ENCODE measurements at regions of chr3 and their contacts with region 1.

Region 1: GRCh38 chr3:149129326-149130205 is at the start of gene HPS3:
- DNase-seq: peak; percentile 89 to 94 (median 92)
- H3K4me3 ChIP-seq: peak within 1 kb of the TSS; percentile 63 to 99 (median 94)
- H3K27ac ChIP-seq: peak within 1 kb of the TSS; percentile 20 to 95 (median 82)
- H3K27me3 ChIP-seq: no peaks in the 10 kb centered on the region
- CTCF ChIP-seq: peak in 45 of 56 donors; percentile 11 to 62 (median 41)
- total RNA-seq, gene HPS3: 12.3 to 28.4 (median 19.4) TPM

Region 2: DNA sequence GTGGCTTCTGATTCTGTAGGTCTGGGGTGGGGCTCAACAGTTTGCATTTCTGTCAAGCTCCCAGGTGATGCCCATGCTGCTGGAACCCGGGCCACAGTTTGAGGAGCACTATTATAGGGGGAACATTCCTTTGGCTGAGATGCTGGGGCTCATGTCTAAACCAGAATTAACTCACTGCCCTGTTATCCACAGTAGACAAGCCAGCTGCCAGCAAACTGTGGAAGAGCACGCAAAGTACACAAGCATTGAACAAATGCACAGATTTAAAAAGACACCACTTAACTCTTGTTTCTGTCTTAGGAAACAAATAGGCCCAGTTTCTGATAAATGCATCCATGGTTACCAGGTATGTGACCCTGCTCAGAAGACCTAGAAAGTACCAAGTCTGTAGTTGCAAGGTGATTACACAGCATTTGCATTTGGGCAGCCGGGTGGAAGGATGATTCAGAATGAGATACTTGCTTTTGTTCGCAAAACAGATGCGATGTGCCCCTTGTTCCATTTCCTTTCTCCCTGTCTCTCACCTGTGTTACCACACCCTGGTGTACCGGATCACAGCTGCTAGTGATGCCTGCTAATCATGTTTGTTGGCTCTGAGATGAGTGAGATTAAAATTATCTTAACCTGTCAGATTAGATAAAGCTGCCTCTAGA is 125.8 kb before region 1 on chr3:
- intact Hi-C with region 1: no loop called
- DNase-seq: no peak
- H3K4me3 ChIP-seq: no peak overlapping the region
- H3K27ac ChIP-seq: peak overlapping the region in 1 of 59 donors; percentile 43
- H3K27me3 ChIP-seq: no peaks in the 10 kb centered on the region
- CTCF ChIP-seq: no peak

Region 3: GRCh38 chr3:149086232-149086988 is 43.2 kb before region 1 on chr3 and contains the start of gene HLTF:
- intact Hi-C with region 1: loop called in 1 of 2 experiments (anchors 1 kb)
- DNase-seq: peak; percentile 90 to 97 (median 95)
- H3K4me3 ChIP-seq: peak within 1 kb of the TSS; percentile 45 to 97 (median 85)
- H3K27ac ChIP-seq: peak within 1 kb of the TSS in 56 of 59 donors; percentile 0 to 91 (median 79)
- H3K27me3 ChIP-seq: no peaks in the 10 kb centered on the region
- CTCF ChIP-seq: peak in 17 of 56 donors; percentile 2 to 37 (median 13)
- total RNA-seq, gene HLTF: 29.5 to 74.9 (median 50.5) TPM

Region 4: DNA sequence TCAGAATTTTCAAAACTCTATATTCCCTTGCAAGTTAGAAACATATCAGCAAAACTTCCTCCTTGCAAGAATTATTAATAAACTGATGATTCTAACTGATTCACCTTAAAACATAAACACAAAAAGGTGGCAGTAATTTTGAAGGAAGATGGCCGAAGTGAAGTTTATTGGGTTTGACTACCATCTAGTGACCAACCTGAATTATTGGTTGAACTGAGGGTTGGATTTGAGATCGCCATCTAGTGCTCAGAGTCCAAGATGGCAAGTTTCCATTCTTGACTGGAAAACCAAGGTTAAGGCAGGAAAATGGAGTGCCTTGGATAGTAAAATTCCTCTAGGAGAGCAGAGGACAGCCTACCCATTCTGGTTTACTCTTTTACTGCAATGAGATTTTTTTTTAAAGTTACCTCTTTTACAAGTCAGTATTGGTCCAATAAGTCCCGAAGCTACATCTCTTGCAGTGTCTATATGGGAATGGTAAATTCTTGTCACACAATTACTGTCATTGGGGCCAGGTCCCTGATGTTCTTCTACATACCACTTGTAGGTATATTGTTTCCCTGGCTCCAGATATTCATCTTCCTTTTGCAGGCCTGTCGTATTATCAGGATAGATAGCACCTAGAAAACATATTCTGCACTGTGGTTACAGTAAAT is 143.7 kb after region 1 on chr3:
- intact Hi-C with region 1: loop called in 1 of 2 experiments (anchors 5 kb)
- DNase-seq: peak in 2 of 10 donors; percentile 36 to 45
- H3K4me3 ChIP-seq: no peak overlapping the region
- H3K27ac ChIP-seq: no peak overlapping the region
- H3K27me3 ChIP-seq: no peaks in the 10 kb centered on the region
- CTCF ChIP-seq: peak; percentile 87 to 100 (median 96)

Measured in dorsolateral prefrontal cortex (tissue), 120 donors.